HEK293T (cell line): ENCODE measurements at regions of chr6 and their contacts with region 1.

Region 1: GRCh38 chr6:152948150-152948768 is 34.6 kb downstream of the FBXO5 start:
- DNase-seq: peak; percentile 52

Region 2: GRCh38 chr6:152750694-152751093 is 197.6 kb before region 1 on chr6 and contains the start of gene VIP:
- CTCF ChIA-PET with region 1: interaction called, 17 read pairs
- POLR2A ChIA-PET with region 1: no interaction called
- DNase-seq: peak; percentile 60

Region 3: GRCh38 chr6:152863618-152864326 is 84.5 kb before region 1 on chr6:
- CTCF ChIA-PET with region 1: interaction called, 11 read pairs
- POLR2A ChIA-PET with region 1: no interaction called
- DNase-seq: peak; percentile 53